ENCODE measurements at regions of chr5 and their contacts with region 1.

Region 1: GRCh38 chr5:148374692-148375360 is 8.9 kb upstream of the FBXO38 start:
- DNase-seq: peak; percentile 85
- ATAC-seq: peak; percentile 73
- H3K4me3 ChIP-seq: no peak overlapping the region
- H3K27ac ChIP-seq: no peak overlapping the region
- H3K4me1 ChIP-seq: peaks cover 14% of the 10 kb centered on the region
- H3K27me3 ChIP-seq: no peaks in the 10 kb centered on the region
- CTCF ChIP-seq: peak; percentile 98

Region 2: GRCh38 chr5:148290271-148291195 is 84.3 kb before region 1 on chr5:
- CTCF ChIA-PET with region 1: interaction called, 6 read pairs
- POLR2A ChIA-PET with region 1: no interaction called
- intact Hi-C with region 1: loop called (anchors 1 kb)
- DNase-seq: peak; percentile 66
- ATAC-seq: peak; percentile 90
- H3K4me3 ChIP-seq: no peak overlapping the region
- H3K27ac ChIP-seq: no peak overlapping the region
- H3K4me1 ChIP-seq: no peaks in the 10 kb centered on the region
- H3K27me3 ChIP-seq: no peaks in the 10 kb centered on the region
- CTCF ChIP-seq: peak; percentile 92

Region 3: DNA sequence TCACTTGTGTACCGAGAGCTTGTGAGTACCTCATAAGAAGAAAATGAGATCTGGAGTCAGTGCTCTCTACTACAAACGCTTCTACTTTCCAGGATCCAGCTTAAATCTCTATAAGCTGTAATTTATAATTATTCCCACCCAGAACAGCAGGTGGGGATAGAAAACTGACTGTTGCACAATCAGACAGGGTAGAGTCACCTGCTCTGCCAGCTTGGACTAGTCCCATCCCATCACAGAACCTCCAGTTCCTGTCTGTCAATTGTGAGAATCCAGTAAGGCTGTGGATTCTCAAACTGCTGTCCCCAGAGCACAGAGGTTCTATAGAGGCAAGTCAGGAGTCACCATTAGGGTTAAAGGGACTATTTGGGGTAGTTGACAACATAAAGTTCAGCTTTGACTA is 60.6 kb before region 1 on chr5:
- CTCF ChIA-PET with region 1: interaction called, 11 read pairs
- POLR2A ChIA-PET with region 1: no interaction called
- intact Hi-C with region 1: loop called (anchors 1 kb)
- DNase-seq: peak; percentile 70
- ATAC-seq: peak; percentile 97
- H3K4me3 ChIP-seq: no peak overlapping the region
- H3K27ac ChIP-seq: no peak overlapping the region
- H3K4me1 ChIP-seq: peaks cover 10% of the 10 kb centered on the region; the same call in 1 of the 2 replicates
- H3K27me3 ChIP-seq: no peaks in the 10 kb centered on the region
- CTCF ChIP-seq: peak; percentile 64

Region 4: DNA sequence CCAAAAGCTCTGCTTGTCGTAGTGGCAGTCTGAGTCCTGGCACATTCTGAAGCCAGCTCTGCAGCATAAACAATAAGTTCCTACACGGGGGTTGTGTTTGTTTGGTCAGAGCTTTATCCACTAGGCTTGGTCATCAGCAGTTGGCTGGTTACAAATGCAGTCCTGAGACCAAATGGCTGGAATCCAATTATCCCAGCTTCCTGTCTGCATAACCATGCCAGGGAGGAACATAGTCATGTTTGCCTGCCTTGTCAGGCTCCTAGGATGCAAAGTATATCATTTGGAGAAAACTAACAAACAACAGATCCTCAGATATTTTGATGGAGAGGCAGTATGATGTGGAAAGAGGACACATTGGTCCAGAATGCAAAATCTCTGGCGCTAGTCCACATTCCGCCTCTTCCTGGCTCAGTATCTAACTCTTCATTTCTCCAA is 94.7 kb after region 1 on chr5:
- CTCF ChIA-PET with region 1: no interaction called
- POLR2A ChIA-PET with region 1: no interaction called
- intact Hi-C with region 1: no loop called
- DNase-seq: peak; percentile 97
- ATAC-seq: peak; percentile 76
- H3K4me3 ChIP-seq: no peak overlapping the region
- H3K27ac ChIP-seq: no peak overlapping the region
- H3K4me1 ChIP-seq: peaks cover 28% of the 10 kb centered on the region
- H3K27me3 ChIP-seq: no peaks in the 10 kb centered on the region
- CTCF ChIP-seq: no peak

Measured in PC-3 (cell line).